ENCODE measurements at regions of chr15 and their contacts with region 1.

Region 1: DNA sequence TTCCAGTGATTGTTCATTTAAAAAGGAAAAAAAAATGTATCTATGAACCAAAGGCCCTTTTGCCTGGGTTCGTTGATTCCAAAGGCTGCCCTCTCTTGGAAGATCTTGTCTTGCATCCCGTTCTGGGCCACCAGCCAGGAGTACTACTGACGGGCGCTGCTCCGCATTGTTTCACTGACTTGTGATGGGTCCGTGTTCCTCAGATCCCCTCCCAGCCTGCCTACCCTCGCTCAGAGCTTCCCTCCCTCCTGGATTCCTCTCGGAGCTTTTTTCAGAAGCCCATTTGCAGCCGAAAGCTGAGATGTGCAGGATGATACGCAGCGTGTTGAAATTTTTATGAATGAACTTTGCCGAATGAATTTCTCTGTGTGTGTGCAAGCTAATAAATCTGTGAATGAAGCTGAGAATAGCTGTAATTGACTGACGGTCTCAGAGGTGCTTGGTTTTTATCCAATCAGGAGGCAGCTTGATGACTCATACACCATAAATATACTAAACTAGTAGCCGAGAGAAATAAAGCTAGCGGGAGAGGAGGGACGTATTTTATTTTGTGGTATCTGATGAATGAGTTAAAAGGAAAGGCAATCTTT is at the start of gene SHC4:
- DNase-seq: peak; percentile 37 to 63
- ATAC-seq: peak; percentile 88 to 89
- H3K4me3 ChIP-seq: peak within 1 kb of the TSS; percentile 52
- H3K27ac ChIP-seq: peak within 1 kb of the TSS; percentile 49 to 75; a peak in 5 of 6 replicates
- H3K4me1 ChIP-seq: no peaks in the 10 kb centered on the region
- CTCF ChIP-seq: peak; percentile 29
- EP300 ChIP-seq: no peak
- POLR2A ChIP-seq: no peak
- RAD21 ChIP-seq: peak in 1 of 2 experiments; percentile 9; a peak in 1 of 5 replicates
- polyA plus RNA-seq, gene SHC4: 0.16 and 0.17 TPM in 2 replicates

Region 2: GRCh38 chr15:48794697-48795134 is 168.9 kb before region 1 on chr15:
- CTCF ChIA-PET with region 1: no interaction called
- POLR2A ChIA-PET with region 1: no interaction called
- DNase-seq: peak in 1 of 2 experiments; percentile 31
- ATAC-seq: no peak
- H3K4me3 ChIP-seq: no peak overlapping the region
- H3K27ac ChIP-seq: peak overlapping the region in 1 of 2 experiments; percentile 41; a peak in 1 of 6 replicates
- H3K4me1 ChIP-seq: peaks cover 20% of the 10 kb centered on the region
- CTCF ChIP-seq: no peak
- EP300 ChIP-seq: no peak
- POLR2A ChIP-seq: no peak
- RAD21 ChIP-seq: no peak

Region 3: DNA sequence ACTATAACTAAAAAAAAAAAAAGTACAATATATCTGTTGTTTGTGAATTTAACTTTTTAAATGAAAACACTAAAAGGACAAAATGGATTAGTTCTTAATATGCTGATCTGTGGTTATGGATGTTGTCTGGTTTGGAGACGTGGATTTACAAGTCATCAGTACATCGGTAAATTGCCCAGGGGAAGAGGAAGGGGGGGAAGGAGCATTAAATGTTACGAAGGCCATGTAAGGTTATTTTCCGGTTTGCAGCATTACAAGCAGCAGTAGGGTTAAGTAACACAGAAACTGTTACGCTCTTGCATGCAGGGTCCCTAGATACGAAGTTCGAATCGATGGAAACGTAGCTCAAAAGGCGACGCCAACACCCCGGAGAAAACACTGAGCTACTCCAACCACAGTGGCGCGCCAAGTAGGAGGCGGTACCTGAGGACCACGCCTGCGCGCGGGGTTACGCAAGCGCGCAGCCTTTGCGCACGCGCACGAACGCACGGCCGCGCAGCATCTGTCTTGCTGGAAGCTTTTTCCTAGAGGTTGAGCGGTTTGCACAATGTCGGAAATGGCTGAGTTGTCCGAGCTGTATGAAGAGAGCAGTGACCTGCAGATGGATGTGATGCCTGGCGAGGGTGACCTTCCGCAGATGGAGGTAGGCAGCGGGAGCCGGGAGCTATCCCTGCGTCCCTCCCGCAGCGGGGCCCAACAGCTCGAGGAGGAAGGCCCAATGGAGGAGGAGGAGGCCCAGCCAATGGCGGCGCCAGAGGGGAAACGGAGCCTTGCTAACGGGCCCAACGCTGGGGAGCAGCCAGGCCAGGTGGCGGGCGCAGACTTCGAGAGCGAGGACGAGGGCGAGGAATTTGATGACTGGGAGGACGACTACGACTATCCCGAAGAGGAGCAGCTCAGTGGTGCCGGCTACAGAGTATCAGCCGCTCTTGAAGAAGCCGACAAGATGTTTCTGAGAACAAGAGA is 85.7 kb before region 1 on chr15 and contains the start of gene EID1:
- CTCF ChIA-PET with region 1: interaction called, 9 read pairs
- POLR2A ChIA-PET with region 1: interaction called, 16 read pairs
- DNase-seq: peak; percentile 54 to 93
- ATAC-seq: peak; percentile 98
- H3K4me3 ChIP-seq: peak within 1 kb of the TSS; percentile 96
- H3K27ac ChIP-seq: peak within 1 kb of the TSS; percentile 91
- H3K4me1 ChIP-seq: peaks cover 15% of the 10 kb centered on the region; the same call in 1 of the 3 replicates
- CTCF ChIP-seq: no peak
- EP300 ChIP-seq: no peak
- POLR2A ChIP-seq: peak; percentile 71
- RAD21 ChIP-seq: no peak
- polyA plus RNA-seq, gene EID1: 80.2 and 125 TPM in 2 replicates

Region 4: GRCh38 chr15:48975472-48976419 is 12.1 kb after region 1 on chr15:
- CTCF ChIA-PET with region 1: interaction called, 27 read pairs
- POLR2A ChIA-PET with region 1: interaction called, 9 read pairs
- DNase-seq: peak; percentile 46 to 74
- ATAC-seq: peak; percentile 97 to 99
- H3K4me3 ChIP-seq: peak overlapping the region; percentile 60
- H3K27ac ChIP-seq: peak overlapping the region; percentile 88 to 96
- H3K4me1 ChIP-seq: 0 out of 3 replicates have a peak, but pooled peaks cover 5% of the 10 kb centered on the region
- CTCF ChIP-seq: peak; percentile 67
- EP300 ChIP-seq: no peak
- POLR2A ChIP-seq: peak; percentile 27; the same call in 1 of the 2 replicates
- RAD21 ChIP-seq: peak; percentile 34 to 49; a peak in 3 of 5 replicates

Region 5: DNA sequence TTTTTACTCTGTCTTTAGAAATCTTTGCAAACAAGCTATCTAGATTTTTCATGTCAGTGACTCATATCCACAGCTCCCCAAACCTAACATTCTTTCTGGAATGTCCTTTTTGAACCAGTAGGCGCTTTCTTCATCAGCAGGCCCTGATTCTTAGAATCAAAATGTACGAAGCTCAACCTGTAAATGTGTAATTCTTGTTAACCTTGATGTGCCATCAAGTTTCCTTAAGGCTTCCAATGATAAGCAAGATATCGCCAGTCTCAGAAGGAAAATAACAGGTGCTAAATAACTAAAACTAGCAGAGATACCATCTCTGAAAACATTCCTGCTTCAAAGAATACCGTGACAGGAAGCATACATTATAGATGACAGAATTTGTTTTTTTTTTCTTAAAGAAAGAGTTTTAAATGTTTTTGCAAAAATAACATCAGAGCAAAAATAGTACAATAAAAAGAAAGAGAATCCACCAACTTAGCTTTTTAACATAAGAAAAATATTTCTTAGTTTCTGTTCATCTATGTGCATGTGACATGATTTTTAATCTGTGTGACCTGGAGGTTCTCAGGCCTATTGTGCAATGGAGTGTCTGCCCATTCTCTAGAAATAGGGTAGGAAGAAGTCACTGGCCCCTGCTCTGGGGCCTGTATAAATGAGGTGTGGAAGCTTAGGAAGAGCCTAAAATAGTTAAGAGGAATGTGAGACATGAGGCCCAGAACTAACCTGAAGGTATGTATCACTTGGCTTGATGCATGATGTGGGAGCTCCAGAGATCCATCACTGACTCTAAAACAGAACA is 97.3 kb after region 1 on chr15:
- CTCF ChIA-PET with region 1: no interaction called
- POLR2A ChIA-PET with region 1: no interaction called
- DNase-seq: no peak
- ATAC-seq: no peak
- H3K4me3 ChIP-seq: no peak overlapping the region
- H3K27ac ChIP-seq: no peak overlapping the region
- H3K4me1 ChIP-seq: no peaks in the 10 kb centered on the region
- CTCF ChIP-seq: no peak
- EP300 ChIP-seq: no peak
- POLR2A ChIP-seq: no peak
- RAD21 ChIP-seq: no peak

Region 6: GRCh38 chr15:49110158-49110944 is 146.7 kb after region 1 on chr15:
- CTCF ChIA-PET with region 1: no interaction called
- POLR2A ChIA-PET with region 1: no interaction called
- DNase-seq: no peak
- ATAC-seq: no peak
- H3K4me3 ChIP-seq: no peak overlapping the region
- H3K27ac ChIP-seq: no peak overlapping the region
- H3K4me1 ChIP-seq: no peaks in the 10 kb centered on the region
- CTCF ChIP-seq: no peak
- EP300 ChIP-seq: no peak
- POLR2A ChIP-seq: no peak
- RAD21 ChIP-seq: no peak